ENCODE measurements at regions of chr1 and their contacts with region 1.

Region 1: DNA sequence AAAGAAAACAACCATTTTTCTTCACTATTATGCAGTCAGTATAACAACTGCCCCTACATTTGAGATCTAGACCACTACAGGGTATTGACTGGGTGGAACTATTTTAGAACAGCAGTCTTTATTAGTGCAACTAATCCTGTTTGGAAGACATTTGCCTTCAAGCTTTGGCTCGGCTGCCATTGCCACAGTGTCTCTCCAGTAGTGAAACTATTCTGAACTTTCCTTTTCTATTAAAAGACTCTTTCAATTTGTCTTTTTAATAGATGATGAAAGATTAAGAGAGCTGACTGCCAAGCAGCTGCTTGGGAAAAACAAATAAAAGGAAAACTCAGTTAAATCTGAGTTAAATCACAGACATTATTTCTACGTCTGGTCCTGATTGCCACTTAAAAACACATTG is 49.3 kb downstream of the LPGAT1 start:
- DNase-seq: no peak
- ATAC-seq: no peak
- H3K4me3 ChIP-seq: no peak overlapping the region
- H3K4me3 Mint-ChIP-seq: no peak overlapping the region
- H3K27ac ChIP-seq: no peak overlapping the region
- H3K27ac Mint-ChIP-seq: no peak overlapping the region
- H3K4me1 ChIP-seq: no peaks in the 10 kb centered on the region
- H3K4me1 Mint-ChIP-seq: peaks cover 7% of the 10 kb centered on the region
- H3K27me3 ChIP-seq: no peaks in the 10 kb centered on the region
- H3K27me3 Mint-ChIP-seq: no peaks in the 10 kb centered on the region
- CTCF ChIP-seq: no peak

Region 2: DNA sequence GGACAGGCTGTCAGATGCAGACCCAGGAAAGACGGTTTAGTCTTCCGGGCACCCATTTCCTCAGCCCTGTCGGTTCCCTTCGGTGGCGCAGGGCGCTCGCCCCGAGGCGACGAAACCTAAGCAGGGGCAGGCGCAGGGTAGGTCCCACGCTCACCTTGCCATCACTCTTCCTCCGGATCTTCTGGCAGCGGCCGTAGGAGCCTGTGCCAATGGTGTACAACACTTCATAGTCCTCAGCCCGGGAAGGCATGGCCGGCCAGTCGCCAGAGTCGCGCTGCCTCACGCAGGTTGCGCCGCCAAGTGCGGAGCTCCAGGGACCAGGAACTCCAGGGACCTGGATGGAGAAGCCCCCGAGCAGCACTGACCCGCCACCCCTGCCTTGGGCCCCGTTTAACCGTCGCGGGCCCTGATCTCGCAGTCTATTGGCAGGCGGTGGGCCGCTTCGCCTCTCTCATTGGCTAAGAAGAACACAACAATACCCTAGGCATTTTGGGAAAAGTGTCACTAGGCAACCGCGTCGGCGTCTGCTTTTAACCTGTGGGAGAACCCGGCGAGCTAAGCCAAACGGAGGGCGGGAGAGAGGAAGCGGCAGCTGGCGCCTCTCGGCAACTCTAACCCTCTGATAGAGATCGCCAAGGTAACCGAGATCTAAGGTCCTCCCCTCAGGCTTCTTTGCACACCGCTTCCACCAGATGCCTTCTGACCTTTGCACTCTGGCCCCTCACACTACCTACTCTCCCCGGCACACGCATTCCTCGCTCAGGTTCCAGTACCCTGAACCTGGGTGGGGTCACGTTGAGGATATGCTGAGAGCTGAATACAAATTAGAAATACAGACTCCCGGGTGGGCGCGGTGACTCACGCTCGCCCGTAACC is 105.8 kb before region 1 on chr1 and contains the start of gene NEK2:
- CTCF ChIA-PET with region 1: no interaction called
- POLR2A ChIA-PET with region 1: no interaction called
- intact Hi-C with region 1: loop called in 1 of 2 experiments (anchors 5 kb)
- DNase-seq: peak; percentile 61 to 92 (median 84)
- ATAC-seq: peak; percentile 89
- H3K4me3 ChIP-seq: peak within 1 kb of the TSS; percentile 67 to 85
- H3K4me3 Mint-ChIP-seq: peak within 1 kb of the TSS; percentile 91
- H3K27ac ChIP-seq: peak within 1 kb of the TSS; percentile 18 to 22
- H3K27ac Mint-ChIP-seq: peak within 1 kb of the TSS; percentile 76
- H3K4me1 ChIP-seq: peaks cover 7% of the 10 kb centered on the region
- H3K4me1 Mint-ChIP-seq: peaks cover 14% of the 10 kb centered on the region
- H3K27me3 ChIP-seq: no peaks in the 10 kb centered on the region
- H3K27me3 Mint-ChIP-seq: no peaks in the 10 kb centered on the region
- CTCF ChIP-seq: no peak
- total RNA-seq, gene NEK2: 0.19 to 0.35 TPM

Region 3: DNA sequence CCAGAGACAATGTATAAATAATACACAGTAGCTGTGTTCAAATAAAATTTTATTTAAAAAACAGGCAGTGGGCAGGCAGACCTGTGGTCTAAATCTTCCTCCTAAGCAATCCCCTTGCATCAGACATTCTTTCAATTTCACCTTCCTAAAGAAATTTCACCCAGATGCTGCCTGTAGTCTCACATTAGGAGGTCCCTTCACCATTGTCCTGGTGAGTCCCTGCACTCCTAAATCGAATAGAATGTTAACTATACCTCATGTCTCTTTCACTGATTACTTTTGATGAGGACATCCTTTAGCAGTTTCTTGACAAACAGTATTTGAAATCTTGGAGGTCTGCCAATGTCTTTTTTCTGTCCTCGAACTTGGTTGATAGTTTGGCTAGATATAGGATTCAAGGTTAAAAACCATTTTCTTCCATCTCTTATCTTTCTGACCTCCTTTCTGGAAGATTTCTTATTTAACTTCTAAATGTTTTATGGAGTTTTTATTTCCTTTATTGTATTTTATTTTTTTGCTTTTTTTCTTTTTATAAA is 28.2 kb before region 1 on chr1:
- CTCF ChIA-PET with region 1: no interaction called
- POLR2A ChIA-PET with region 1: no interaction called
- intact Hi-C with region 1: no loop called
- DNase-seq: no peak
- ATAC-seq: no peak
- H3K4me3 ChIP-seq: no peak overlapping the region
- H3K4me3 Mint-ChIP-seq: no peak overlapping the region
- H3K27ac ChIP-seq: no peak overlapping the region
- H3K27ac Mint-ChIP-seq: no peak overlapping the region
- H3K4me1 ChIP-seq: no peaks in the 10 kb centered on the region
- H3K4me1 Mint-ChIP-seq: no peaks in the 10 kb centered on the region
- H3K27me3 ChIP-seq: no peaks in the 10 kb centered on the region
- H3K27me3 Mint-ChIP-seq: no peaks in the 10 kb centered on the region
- CTCF ChIP-seq: no peak